ENCODE measurements at regions of chr15 and their contacts with region 1.

Region 1: DNA sequence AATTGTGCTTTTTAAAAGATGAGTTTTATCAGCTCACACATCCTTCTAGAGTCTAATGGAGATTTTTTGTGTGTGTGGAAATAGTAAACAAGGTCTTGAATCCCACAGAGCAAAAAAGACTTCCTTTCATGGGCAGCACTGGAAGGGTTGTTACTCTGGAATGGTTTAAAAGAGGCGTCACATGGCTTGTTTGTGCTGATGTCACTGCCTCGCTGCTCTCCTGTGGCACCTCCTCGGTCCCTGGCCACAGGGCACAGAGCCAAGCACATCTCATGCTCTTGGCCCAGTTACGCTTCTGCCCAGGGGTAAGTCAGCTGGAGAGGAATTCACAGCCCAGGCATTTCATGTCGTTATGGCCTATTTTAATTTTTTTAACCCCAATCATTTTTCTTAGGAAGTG is 53.2 kb downstream of the PGPEP1L start:
- DNase-seq: no peak
- ATAC-seq: no peak
- H3K4me3 ChIP-seq: no peak overlapping the region
- H3K4me3 Mint-ChIP-seq: peak overlapping the region; percentile 25
- H3K27ac ChIP-seq: no peak overlapping the region
- H3K27ac Mint-ChIP-seq: no peak overlapping the region
- H3K4me1 ChIP-seq: peaks cover 79% of the 10 kb centered on the region
- H3K4me1 Mint-ChIP-seq: peaks cover 55 to 61% of the 10 kb centered on the region in 2 donors
- H3K27me3 ChIP-seq: no peaks in the 10 kb centered on the region
- H3K27me3 Mint-ChIP-seq: no peaks in the 10 kb centered on the region
- CTCF ChIP-seq: no peak

Region 2: GRCh38 chr15:98647774-98648653 is 306.4 kb before region 1 on chr15 and contains the start of gene IGF1R:
- intact Hi-C with region 1: loop called (anchors 5 kb)
- DNase-seq: peak; percentile 94 to 95
- ATAC-seq: peak; percentile 73 to 91 (median 79)
- H3K4me3 ChIP-seq: peak within 1 kb of the TSS; percentile 84
- H3K4me3 Mint-ChIP-seq: peak within 1 kb of the TSS; percentile 91
- H3K27ac ChIP-seq: peak within 1 kb of the TSS; percentile 53
- H3K27ac Mint-ChIP-seq: peak within 1 kb of the TSS; percentile 60 to 99
- H3K4me1 ChIP-seq: peaks cover 24% of the 10 kb centered on the region
- H3K4me1 Mint-ChIP-seq: peaks cover 28 to 35% of the 10 kb centered on the region in 2 donors
- H3K27me3 ChIP-seq: peaks cover 15% of the 10 kb centered on the region
- H3K27me3 Mint-ChIP-seq: peaks cover 33 to 36% of the 10 kb centered on the region in 2 donors
- CTCF ChIP-seq: no peak
- total RNA-seq, gene IGF1R: 47.3 to 50.7 (median 49.0) TPM

Region 3: DNA sequence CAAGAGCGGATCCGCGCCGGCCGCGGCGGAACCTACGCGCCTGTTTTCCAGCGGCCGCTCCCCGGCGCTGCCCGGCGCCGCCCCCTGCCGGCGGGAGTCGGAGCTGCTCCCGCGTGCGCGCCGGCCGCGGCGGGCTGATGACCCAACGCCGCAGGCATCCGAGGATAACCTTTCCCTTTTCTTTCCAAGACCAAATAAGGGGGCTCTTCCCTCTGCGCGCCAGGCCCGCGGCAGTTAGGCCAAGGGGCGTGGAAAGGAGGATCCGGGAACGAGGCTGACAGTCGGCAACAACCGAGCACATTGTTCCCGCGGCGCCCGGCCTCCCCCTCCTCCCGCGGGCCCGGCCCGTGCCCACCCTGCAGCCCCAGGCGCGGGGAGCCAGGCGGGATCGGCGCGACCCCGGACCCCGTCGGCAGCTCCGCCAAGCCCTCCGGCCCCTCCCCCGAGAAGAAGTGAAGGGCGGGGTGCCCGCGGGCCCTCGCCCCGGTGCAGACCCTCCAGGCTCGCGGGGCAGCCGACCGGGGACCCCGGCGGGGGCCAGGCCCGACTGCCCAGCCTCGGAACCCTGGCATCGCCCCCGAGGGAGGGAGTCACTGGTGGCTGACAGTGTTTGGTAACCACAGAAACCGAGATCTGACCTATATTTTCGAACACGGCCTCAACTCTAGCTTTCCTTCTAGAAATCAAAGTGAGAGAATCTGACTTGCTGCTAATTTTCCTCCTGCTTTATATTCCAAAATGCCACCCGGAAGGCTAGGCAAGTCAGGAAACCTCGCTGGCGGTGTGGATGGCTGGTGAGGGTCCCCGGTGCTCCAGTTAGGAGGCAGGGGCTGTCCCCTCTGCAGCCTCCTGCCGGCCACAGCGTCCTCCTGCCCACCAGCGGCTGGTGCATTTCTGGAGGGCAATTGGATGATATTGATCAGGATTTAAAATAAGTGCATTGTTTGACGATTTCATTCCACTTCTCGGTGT is 104.9 kb after region 1 on chr15:
- intact Hi-C with region 1: loop called (anchors 5 kb)
- DNase-seq: peak; percentile 62 to 70
- ATAC-seq: peak; percentile 73 to 95 (median 91)
- H3K4me3 ChIP-seq: peak overlapping the region; percentile 33
- H3K4me3 Mint-ChIP-seq: peak overlapping the region; percentile 81
- H3K27ac ChIP-seq: no peak overlapping the region
- H3K27ac Mint-ChIP-seq: no peak overlapping the region
- H3K4me1 ChIP-seq: peaks cover 12% of the 10 kb centered on the region
- H3K4me1 Mint-ChIP-seq: peaks cover 0 to 17% of the 10 kb centered on the region in 2 donors
- H3K27me3 ChIP-seq: peaks cover 8% of the 10 kb centered on the region
- H3K27me3 Mint-ChIP-seq: peaks cover 19 to 30% of the 10 kb centered on the region in 2 donors
- CTCF ChIP-seq: peak; percentile 73

Measured in natural killer cell (primary cell).